ENCODE measurements at regions of chr19 and their contacts with region 1.

Region 1: GRCh38 chr19:35740423-35741202 is 1.6 kb downstream of the IGFLR1 start:
- DNase-seq: peak; percentile 99
- H3K4me3 Mint-ChIP-seq: peak overlapping the region; percentile 91
- H3K27ac Mint-ChIP-seq: peak overlapping the region; percentile 97
- H3K4me1 Mint-ChIP-seq: peaks cover 44% of the 10 kb centered on the region
- H3K27me3 Mint-ChIP-seq: no peaks in the 10 kb centered on the region

Region 2: GRCh38 chr19:35648017-35648961 is 92.3 kb before region 1 on chr19 and contains the start of gene COX6B1:
- intact Hi-C with region 1: loop called (anchors 2 kb)
- DNase-seq: peak; percentile 98
- H3K4me3 Mint-ChIP-seq: peak within 1 kb of the TSS; percentile 96
- H3K27ac Mint-ChIP-seq: peak within 1 kb of the TSS; percentile 88
- H3K4me1 Mint-ChIP-seq: peaks cover 31% of the 10 kb centered on the region
- H3K27me3 Mint-ChIP-seq: no peaks in the 10 kb centered on the region
- total RNA-seq, gene COX6B1: 451 and 472 TPM in 2 replicates

Region 3: DNA sequence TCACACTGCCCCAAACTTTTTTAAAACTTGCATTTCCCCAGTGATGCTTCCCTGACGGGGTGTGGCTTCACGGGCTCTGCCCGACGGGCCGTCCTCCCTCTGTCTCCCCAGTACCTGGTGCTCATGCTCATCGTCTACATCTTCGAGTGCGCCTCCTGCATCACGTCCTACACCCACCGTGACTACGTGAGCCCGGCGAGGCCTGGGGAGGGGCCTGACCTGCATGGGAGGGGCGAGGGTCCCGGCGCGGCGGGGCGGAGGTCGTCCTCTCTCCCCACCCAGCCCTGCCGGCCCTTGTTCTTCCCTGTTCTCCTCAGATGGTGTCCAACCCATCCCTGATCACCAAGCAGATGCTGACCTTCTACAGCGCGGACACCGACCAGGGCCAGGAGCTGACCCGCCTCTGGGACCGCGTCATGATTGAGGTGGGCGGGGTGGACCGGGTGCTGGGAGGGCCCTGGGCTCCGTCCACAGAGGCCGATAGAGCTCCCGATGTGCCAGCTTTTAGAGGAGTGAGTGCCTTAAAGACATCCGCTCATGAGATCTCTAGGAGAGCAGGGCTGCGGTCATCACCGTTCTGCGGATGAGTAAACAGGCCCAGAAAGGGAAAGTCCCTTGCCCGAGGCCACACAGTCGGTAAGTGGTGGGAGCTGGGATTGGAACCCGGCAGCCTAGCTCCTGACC is 67.3 kb before region 1 on chr19:
- intact Hi-C with region 1: no loop called
- DNase-seq: peak; percentile 85
- H3K4me3 Mint-ChIP-seq: peak overlapping the region; percentile 83
- H3K27ac Mint-ChIP-seq: peak overlapping the region; percentile 48
- H3K4me1 Mint-ChIP-seq: peaks cover 10% of the 10 kb centered on the region
- H3K27me3 Mint-ChIP-seq: peaks cover 32% of the 10 kb centered on the region

Region 4: GRCh38 chr19:35693830-35694599 is 46.6 kb before region 1 on chr19:
- intact Hi-C with region 1: loop called (anchors 2 kb)
- DNase-seq: peak; percentile 97
- H3K4me3 Mint-ChIP-seq: no peak overlapping the region
- H3K27ac Mint-ChIP-seq: peak overlapping the region; percentile 35
- H3K4me1 Mint-ChIP-seq: peaks cover 14% of the 10 kb centered on the region
- H3K27me3 Mint-ChIP-seq: no peaks in the 10 kb centered on the region

Region 5: GRCh38 chr19:35710784-35711723 is 29.6 kb before region 1 on chr19:
- intact Hi-C with region 1: loop called (anchors 1 kb)
- DNase-seq: peak; percentile 89
- H3K4me3 Mint-ChIP-seq: peak overlapping the region; percentile 65
- H3K27ac Mint-ChIP-seq: peak overlapping the region; percentile 96
- H3K4me1 Mint-ChIP-seq: peaks cover 42% of the 10 kb centered on the region
- H3K27me3 Mint-ChIP-seq: no peaks in the 10 kb centered on the region

Region 6: GRCh38 chr19:35775298-35776110 is 34.9 kb after region 1 on chr19 and contains the start of gene ARHGAP33:
- intact Hi-C with region 1: loop called (anchors 1 kb)
- DNase-seq: peak; percentile 100
- H3K4me3 Mint-ChIP-seq: peak within 1 kb of the TSS; percentile 88
- H3K27ac Mint-ChIP-seq: peak within 1 kb of the TSS; percentile 71
- H3K4me1 Mint-ChIP-seq: peaks cover 26% of the 10 kb centered on the region
- H3K27me3 Mint-ChIP-seq: no peaks in the 10 kb centered on the region
- total RNA-seq, gene ARHGAP33: 24.6 and 26.4 TPM in 2 replicates

Region 7: DNA sequence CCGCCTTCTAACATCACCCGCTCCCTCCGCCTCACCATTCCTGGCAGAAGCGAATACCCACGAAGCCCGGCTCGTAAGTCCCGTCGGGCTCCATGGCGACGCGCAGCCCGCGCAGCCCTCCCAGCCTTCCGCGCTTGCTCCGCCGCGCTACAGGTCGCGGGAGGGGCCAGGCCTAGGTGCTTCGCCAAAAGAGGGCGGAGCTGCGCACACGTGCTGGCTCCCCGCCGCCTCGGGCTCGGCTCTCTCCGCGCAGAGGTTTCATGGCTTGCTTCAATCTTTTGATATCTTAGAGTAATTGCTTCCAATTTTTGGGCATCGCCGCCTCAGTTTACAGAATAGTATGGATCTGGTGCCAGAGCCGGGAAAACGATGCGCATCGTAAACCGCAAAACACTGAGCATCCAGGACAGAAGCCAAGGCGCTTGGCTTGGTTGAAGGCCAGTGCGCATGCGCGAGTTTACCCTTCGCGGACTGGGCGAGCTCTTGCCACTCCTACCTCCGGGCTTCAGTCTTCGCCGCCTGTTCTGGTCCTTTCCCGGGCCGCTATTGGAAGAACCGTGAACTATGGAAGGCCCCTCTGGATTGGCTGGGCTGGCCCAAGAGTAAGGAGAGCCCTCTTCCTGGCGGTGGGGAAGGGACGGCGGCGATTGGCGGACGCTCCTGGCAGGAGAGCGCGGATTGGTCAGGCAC is 374.3 kb after region 1 on chr19 and contains the start of gene POLR2I:
- intact Hi-C with region 1: loop called (anchors 10 kb)
- DNase-seq: peak; percentile 99
- H3K4me3 Mint-ChIP-seq: peak within 1 kb of the TSS; percentile 94
- H3K27ac Mint-ChIP-seq: peak within 1 kb of the TSS; percentile 95
- H3K4me1 Mint-ChIP-seq: peaks cover 29% of the 10 kb centered on the region
- H3K27me3 Mint-ChIP-seq: peaks cover 4% of the 10 kb centered on the region
- total RNA-seq, gene POLR2I: 83.4 and 86.3 TPM in 2 replicates

Measured in activated CD4-positive, alpha-beta T cell treated with anti-CD3 and anti-CD28 coated beads, Interleukin-2, amount 10 ng/mL, durations not matched to agents 24 days and 14 days (primary cell).